Mammary epithelial cell (primary cell): ENCODE measurements at regions of chr14 and their contacts with region 1.

Region 1: GRCh38 chr14:65517635-65518542 is 105.4 kb downstream of the FUT8 start:
- DNase-seq: no peak
- H3K4me3 ChIP-seq: no peak overlapping the region
- H3K27ac ChIP-seq: no peak overlapping the region
- H3K4me1 ChIP-seq: no peaks in the 10 kb centered on the region
- H3K27me3 ChIP-seq: no peaks in the 10 kb centered on the region
- CTCF ChIP-seq: no peak

Region 2: GRCh38 chr14:66383257-66383656 is 865.4 kb after region 1 on chr14:
- CTCF ChIA-PET with region 1: interaction called, 11 read pairs
- dilution Hi-C with region 1: no loop called
- in situ Hi-C with region 1: no loop called
- intact Hi-C with region 1: no loop called
- DNase-seq: no peak
- H3K4me3 ChIP-seq: no peak overlapping the region
- H3K27ac ChIP-seq: no peak overlapping the region
- H3K4me1 ChIP-seq: peaks cover 26% of the 10 kb centered on the region
- H3K27me3 ChIP-seq: no peaks in the 10 kb centered on the region
- CTCF ChIP-seq: no peak